ENCODE measurements at regions of chr11 and their contacts with region 1.

Region 1: GRCh38 chr11:12680246-12680939 is 6.2 kb downstream of the TEAD1 start:
- DNase-seq: peak; percentile 60
- H3K4me3 ChIP-seq: peak overlapping the region; percentile 31
- CTCF ChIP-seq: no peak

Region 2: GRCh38 chr11:12653725-12654124 is 26.7 kb before region 1 on chr11:
- CTCF ChIA-PET with region 1: no interaction called
- POLR2A ChIA-PET with region 1: no interaction called
- DNase-seq: no peak
- H3K4me3 ChIP-seq: no peak overlapping the region
- CTCF ChIP-seq: no peak

Region 3: DNA sequence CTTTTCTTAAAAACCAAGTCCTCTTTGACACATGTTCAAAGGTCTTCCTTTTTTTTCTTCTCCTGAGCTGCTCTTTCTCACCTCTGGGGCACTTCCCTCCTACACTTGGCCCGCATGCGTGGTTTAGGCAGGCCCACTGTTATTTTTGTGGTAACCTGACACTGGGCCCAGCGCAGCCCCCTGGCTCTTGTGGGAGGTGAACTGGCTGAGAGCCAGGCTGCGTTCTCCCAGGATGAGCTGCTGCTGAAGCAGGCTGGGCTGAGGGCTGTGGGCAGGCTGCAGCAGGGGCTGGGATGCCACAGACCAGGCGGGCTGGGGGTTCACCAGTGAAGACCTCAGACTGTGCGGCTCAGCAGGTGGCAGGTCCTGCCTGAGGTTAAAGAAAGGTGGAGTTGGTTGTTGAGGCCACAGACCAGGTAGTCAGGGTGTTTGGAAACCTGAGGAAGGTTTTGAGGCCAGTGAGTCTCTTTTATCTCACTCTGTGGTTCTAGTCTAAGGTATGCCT is 66.3 kb after region 1 on chr11:
- CTCF ChIA-PET with region 1: no interaction called
- POLR2A ChIA-PET with region 1: no interaction called
- DNase-seq: no peak
- H3K4me3 ChIP-seq: no peak overlapping the region
- CTCF ChIP-seq: no peak

Region 4: GRCh38 chr11:12893787-12894672 is 213.6 kb after region 1 on chr11:
- CTCF ChIA-PET with region 1: interaction called, 28 read pairs
- POLR2A ChIA-PET with region 1: no interaction called
- DNase-seq: no peak
- H3K4me3 ChIP-seq: no peak overlapping the region
- CTCF ChIP-seq: peak; percentile 70